Left ventricle myocardium superior (tissue), 1 donor: ENCODE measurements at regions of chr5 and their contacts with region 1.

Region 1: GRCh38 chr5:155943516-155944407 is 383.2 kb upstream of the SGCD start:
- DNase-seq: peak; percentile 67
- ATAC-seq: peak; percentile 81

Region 2: DNA sequence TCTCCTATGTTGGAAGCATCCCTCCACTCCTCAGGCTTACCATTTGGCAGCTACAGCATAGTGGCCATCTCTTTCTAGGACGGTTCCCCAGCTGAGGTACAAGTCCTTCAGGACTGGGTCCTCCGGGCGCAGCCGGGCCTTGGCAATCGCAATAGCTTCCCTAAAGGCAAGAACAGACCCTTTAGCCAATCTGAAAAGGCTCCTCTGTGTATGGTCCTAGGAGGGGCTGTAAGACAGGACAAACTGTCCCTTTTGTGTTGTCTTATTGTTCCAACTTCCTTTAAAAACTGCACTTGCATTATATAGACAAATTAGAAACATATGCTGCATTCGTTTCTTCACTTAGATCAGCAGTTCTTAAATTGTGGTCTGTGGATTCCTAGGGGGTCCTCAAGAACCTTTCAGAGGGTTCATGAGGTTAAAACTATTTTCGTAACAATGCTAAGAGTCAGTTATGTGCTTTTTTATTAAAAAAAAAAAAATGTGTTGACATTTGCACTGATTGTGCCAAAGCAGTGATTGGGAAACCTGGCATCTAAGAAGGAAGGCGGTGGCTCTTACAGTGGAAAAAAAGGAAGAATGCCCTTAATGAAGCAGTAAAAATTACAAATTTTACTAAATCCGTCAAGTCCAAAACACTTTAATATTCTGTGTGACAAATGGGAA is 1044.5 kb before region 1 on chr5:
- intact Hi-C with region 1: no loop called
- DNase-seq: no peak
- ATAC-seq: peak; percentile 20

Region 3: DNA sequence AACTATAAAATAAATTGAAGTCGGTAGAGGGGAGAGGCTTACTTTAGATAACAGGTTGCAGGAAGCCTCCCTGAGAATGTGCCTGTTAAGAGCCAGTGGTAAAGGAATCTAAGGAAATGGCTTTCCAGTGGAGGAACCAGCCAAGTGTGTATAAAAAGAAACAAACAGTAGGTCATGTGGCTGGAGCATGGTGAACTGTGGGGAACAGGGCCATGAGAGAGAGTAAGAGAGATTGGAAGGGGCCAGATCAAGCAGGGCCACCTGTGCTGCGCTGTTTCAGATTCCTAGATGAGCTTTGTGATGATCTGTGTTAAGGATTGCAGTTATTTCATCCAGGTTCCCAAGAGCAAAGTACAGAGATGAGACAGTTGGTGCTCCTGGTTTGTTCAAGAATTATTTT is 230.5 kb after region 1 on chr5:
- intact Hi-C with region 1: no loop called
- DNase-seq: no peak
- ATAC-seq: peak; percentile 40

Region 4: DNA sequence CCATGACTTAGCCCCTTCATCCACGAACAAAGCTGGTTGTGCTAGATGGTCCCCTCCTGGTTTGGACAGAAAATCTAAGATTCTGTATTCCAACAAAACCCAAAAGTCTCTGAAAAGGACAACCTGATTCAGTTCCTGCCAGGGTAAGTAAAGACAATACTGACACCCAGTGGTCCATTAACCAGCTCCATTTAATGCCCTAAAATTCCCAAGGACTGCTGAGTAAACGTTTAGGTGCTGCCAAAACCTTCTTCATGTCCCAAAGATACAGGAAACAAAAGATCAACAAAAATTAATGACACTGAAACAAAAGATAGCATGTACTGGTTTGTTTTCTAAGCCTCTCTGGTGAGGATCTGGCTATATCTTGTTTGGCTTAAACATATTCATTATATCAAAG is 881.0 kb after region 1 on chr5:
- intact Hi-C with region 1: loop called (anchors 10 kb)
- DNase-seq: no peak
- ATAC-seq: peak; percentile 76